WTC11 (cell line): ENCODE measurements at regions of chr11 and their contacts with region 1.

Region 1: DNA sequence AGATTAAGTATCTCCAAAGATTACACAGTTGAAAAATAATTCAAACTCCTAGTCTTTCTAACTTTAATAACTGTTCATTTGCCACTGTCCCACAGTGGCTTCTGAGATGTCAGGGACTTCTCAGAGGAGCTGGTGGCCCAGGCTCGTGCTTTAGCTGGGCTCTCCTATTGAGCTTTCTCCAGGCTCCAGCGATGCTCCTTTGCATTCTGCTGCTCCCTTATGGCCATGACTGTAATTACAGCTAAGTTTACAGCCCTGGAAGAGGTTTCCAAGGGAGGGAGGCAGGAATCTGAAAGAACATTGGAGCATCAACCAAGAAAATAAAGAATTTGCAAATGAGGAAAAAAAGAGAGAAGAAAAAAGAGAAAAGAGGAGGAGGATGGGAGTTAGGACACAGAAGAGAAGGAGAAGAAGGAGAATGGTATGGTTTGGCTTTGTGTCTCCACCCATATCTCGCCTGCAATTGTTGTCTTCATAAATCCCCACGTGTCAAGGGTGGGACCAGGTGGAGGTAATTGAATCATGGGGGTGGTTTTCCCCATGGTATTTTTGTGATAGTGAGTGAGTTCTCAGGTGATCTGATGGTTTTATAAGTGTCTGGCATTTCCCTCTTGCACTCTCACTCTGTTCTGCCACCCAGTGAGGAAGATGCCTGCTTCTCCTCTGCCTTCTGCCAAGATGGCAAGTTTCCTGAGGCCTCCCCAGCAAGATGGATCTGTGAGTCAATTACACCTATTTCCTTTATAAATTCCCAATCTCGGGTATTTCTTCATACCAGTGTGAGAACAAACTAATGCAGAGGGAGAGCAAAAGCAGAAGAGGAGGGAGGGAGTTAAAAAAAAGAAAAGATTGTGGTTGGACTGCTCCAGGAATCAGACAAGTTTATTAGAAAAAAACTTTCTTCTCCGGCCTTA is 857.0 kb downstream of the KCNA4 start:
- DNase-seq: peak; percentile 64
- ATAC-seq: peak; percentile 100
- H3K4me3 Mint-ChIP-seq: no peak overlapping the region
- H3K27ac Mint-ChIP-seq: no peak overlapping the region
- H3K4me1 Mint-ChIP-seq: peaks cover 9% of the 10 kb centered on the region
- H3K27me3 Mint-ChIP-seq: no peaks in the 10 kb centered on the region
- CTCF ChIP-seq: peak; percentile 34

Region 2: GRCh38 chr11:28674433-28675103 is 485.2 kb before region 1 on chr11:
- CTCF ChIA-PET with region 1: interaction called, 12 read pairs
- POLR2A ChIA-PET with region 1: no interaction called
- DNase-seq: peak; percentile 56
- ATAC-seq: peak; percentile 97
- H3K4me3 Mint-ChIP-seq: no peak overlapping the region
- H3K27ac Mint-ChIP-seq: no peak overlapping the region
- H3K4me1 Mint-ChIP-seq: peaks cover 15% of the 10 kb centered on the region
- H3K27me3 Mint-ChIP-seq: no peaks in the 10 kb centered on the region
- CTCF ChIP-seq: peak; percentile 23; the same call in 1 of the 2 replicates

Region 3: GRCh38 chr11:29019960-29020683 is 139.7 kb before region 1 on chr11:
- CTCF ChIA-PET with region 1: interaction called, 11 read pairs
- POLR2A ChIA-PET with region 1: no interaction called
- DNase-seq: peak; percentile 19
- ATAC-seq: peak; percentile 72
- H3K4me3 Mint-ChIP-seq: no peak overlapping the region
- H3K27ac Mint-ChIP-seq: no peak overlapping the region
- H3K4me1 Mint-ChIP-seq: peaks cover 17% of the 10 kb centered on the region
- H3K27me3 Mint-ChIP-seq: no peaks in the 10 kb centered on the region
- CTCF ChIP-seq: peak; percentile 43; the same call in 1 of the 2 replicates